PC-3 (cell line): ENCODE measurements at regions of chr13 and their contacts with region 1.

Region 1: GRCh38 chr13:41668130-41668757 is 210.9 kb downstream of the RGCC start:
- DNase-seq: peak; percentile 84
- ATAC-seq: peak; percentile 80
- H3K4me3 ChIP-seq: no peak overlapping the region
- H3K27ac ChIP-seq: no peak overlapping the region
- H3K4me1 ChIP-seq: peaks cover 24% of the 10 kb centered on the region
- H3K27me3 ChIP-seq: no peaks in the 10 kb centered on the region
- CTCF ChIP-seq: peak; percentile 81

Region 2: DNA sequence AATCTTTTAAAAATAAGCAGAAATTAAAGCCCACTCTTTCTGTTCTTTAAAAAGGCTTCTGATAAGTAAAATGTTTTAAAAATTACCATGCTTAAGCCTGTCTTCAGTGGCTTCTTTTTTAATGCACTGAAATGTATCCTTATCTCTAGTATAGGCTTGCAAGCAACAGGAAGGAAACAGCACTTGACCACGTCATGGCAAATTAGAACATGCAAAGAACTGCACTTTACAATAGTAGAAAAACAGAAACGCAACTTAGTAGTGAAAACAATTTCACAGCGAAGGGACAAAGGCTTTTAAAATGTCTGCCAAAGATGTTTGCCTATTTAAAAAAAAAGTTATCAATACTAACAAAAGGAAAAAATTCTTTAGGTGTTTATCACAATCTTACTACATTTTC is 685.5 kb before region 1 on chr13:
- CTCF ChIA-PET with region 1: no interaction called
- POLR2A ChIA-PET with region 1: no interaction called
- intact Hi-C with region 1: no loop called
- DNase-seq: no peak
- ATAC-seq: no peak
- H3K4me3 ChIP-seq: no peak overlapping the region
- H3K27ac ChIP-seq: no peak overlapping the region
- H3K4me1 ChIP-seq: peaks cover 10% of the 10 kb centered on the region
- H3K27me3 ChIP-seq: no peaks in the 10 kb centered on the region
- CTCF ChIP-seq: no peak

Region 3: GRCh38 chr13:41694545-41695301 is 26.5 kb after region 1 on chr13:
- CTCF ChIA-PET with region 1: no interaction called
- POLR2A ChIA-PET with region 1: interaction called, 3 read pairs
- intact Hi-C with region 1: loop called (anchors 1 kb)
- DNase-seq: peak; percentile 87
- ATAC-seq: peak; percentile 76
- H3K4me3 ChIP-seq: peak overlapping the region; percentile 60
- H3K27ac ChIP-seq: peak overlapping the region; percentile 96
- H3K4me1 ChIP-seq: peaks cover 45% of the 10 kb centered on the region
- H3K27me3 ChIP-seq: no peaks in the 10 kb centered on the region
- CTCF ChIP-seq: no peak

Region 4: DNA sequence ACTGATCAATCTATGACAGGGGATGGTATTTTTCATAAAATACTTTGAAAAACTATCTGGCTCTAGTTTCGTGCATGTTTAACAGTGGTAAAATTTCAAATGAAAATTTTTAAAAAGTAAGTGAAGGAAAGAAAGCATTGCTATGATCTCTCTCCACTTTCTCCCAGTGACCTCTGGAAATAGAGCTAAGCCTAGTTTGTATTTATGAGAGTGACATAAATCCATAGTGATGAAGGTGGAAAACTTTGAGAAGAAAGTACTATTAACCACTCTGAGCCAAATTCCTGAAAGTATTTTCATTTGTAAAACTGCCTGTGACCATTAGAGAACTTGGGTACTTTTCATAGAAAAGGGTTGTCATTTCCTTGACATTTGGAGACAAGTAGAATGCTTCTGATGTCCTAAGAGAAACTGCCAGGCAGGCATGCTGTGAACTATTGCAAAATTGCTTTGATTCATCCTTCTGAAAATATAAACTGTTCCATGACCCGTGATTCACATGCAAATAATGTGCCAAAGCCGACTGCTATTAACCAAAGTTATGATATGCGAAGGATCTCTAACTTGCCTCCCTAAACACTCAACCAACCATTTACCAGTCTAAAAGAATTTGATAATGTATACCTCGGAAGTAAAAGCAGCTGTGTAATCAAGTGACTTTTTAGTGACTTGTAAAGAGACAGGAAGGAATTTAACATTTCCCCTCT is 159.4 kb after region 1 on chr13:
- CTCF ChIA-PET with region 1: no interaction called
- POLR2A ChIA-PET with region 1: no interaction called
- intact Hi-C with region 1: loop called (anchors 10 kb)
- DNase-seq: peak; percentile 88
- ATAC-seq: peak; percentile 96
- H3K4me3 ChIP-seq: no peak overlapping the region
- H3K27ac ChIP-seq: peak overlapping the region; percentile 53
- H3K4me1 ChIP-seq: peaks cover 20% of the 10 kb centered on the region
- H3K27me3 ChIP-seq: no peaks in the 10 kb centered on the region
- CTCF ChIP-seq: no peak

Region 5: DNA sequence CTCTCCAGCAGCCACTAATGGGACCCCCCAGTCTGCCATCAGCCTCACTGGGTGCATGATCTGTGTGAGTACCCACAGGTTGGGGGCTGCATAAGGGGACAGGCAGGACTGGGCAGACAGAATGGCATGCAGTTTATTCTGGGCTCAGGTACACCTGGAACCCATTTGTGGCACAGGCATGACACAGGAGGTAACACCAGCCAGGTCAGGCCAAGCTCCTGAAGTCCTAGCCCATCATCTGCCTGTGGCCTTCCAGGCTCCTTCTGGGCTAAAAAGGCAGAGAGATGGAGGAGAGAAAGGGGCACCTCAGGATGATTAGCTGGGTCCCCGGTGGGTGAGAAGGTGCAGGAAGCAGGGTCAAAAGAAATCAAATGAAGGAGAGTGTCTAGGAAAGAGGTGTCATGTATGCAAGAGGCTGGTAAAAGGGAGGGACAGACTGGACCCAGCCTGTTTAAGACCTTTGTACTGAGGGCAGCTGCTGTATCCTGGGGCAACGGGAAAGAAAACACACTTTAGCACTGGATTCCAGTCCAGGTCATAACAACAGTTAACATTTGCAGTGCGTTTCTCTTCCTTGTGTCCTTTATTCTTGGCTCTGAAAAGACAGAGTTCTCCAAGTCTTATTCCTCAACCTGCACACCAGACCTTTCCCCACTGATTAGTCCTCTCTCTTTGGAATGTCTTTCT is 360.0 kb after region 1 on chr13:
- CTCF ChIA-PET with region 1: no interaction called
- POLR2A ChIA-PET with region 1: no interaction called
- intact Hi-C with region 1: loop called (anchors 5 kb)
- DNase-seq: no peak
- ATAC-seq: no peak
- H3K4me3 ChIP-seq: no peak overlapping the region
- H3K27ac ChIP-seq: no peak overlapping the region
- H3K4me1 ChIP-seq: peaks cover 32% of the 10 kb centered on the region
- H3K27me3 ChIP-seq: no peaks in the 10 kb centered on the region
- CTCF ChIP-seq: no peak

Region 6: GRCh38 chr13:42110410-42111155 is 442.3 kb after region 1 on chr13:
- CTCF ChIA-PET with region 1: interaction called, 3 read pairs
- POLR2A ChIA-PET with region 1: no interaction called
- intact Hi-C with region 1: loop called (anchors 1 kb)
- DNase-seq: peak; percentile 83
- ATAC-seq: no peak; the same call in 1 of the 2 replicates
- H3K4me3 ChIP-seq: no peak overlapping the region
- H3K27ac ChIP-seq: no peak overlapping the region
- H3K4me1 ChIP-seq: peaks cover 52% of the 10 kb centered on the region
- H3K27me3 ChIP-seq: no peaks in the 10 kb centered on the region
- CTCF ChIP-seq: peak; percentile 73